ENCODE measurements at regions of chr9 and their contacts with region 1.

Region 1: DNA sequence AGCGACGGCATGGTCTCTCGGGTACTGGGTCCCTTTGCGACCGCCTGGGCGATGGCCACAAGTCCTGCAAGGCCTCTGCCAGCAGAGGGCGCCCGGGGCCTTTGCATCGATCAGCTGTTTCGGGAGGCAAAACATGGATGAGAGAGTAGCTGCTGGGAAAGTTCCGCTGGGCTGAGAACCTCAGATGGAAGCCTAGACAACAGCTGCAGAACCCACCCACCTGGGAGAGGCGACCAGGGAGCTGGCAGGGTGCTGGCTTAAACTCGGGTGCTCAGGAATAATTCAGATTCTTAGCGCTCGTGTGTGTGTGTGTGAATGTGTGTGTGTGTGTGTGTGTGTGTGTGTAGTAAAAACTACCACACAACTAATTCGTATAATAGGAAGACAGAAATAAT is 50.0 kb downstream of the TRIM32 start:
- DNase-seq: peak; percentile 66
- ATAC-seq: peak; percentile 93
- H3K4me3 ChIP-seq: no peak overlapping the region
- H3K27ac ChIP-seq: no peak overlapping the region
- H3K4me1 ChIP-seq: no peaks in the 10 kb centered on the region
- H3K27me3 ChIP-seq: peaks cover 5% of the 10 kb centered on the region
- CTCF ChIP-seq: peak; percentile 93
- POLR2A ChIP-seq: no peak
- RAD21 ChIP-seq: peak; percentile 91

Region 2: GRCh38 chr9:116726602-116727001 is 10.5 kb before region 1 on chr9:
- CTCF ChIA-PET with region 1: interaction called, 19 read pairs
- POLR2A ChIA-PET with region 1: no interaction called
- dilution Hi-C with region 1: no loop called
- in situ Hi-C with region 1: no loop called
- intact Hi-C with region 1: no loop called
- DNase-seq: no peak
- ATAC-seq: no peak
- H3K4me3 ChIP-seq: no peak overlapping the region
- H3K27ac ChIP-seq: no peak overlapping the region
- H3K4me1 ChIP-seq: no peaks in the 10 kb centered on the region
- H3K27me3 ChIP-seq: peaks cover 16% of the 10 kb centered on the region
- CTCF ChIP-seq: no peak
- POLR2A ChIP-seq: no peak
- RAD21 ChIP-seq: no peak

Region 3: GRCh38 chr9:116860509-116861120 is 123.5 kb after region 1 on chr9:
- CTCF ChIA-PET with region 1: interaction called, 56 read pairs
- POLR2A ChIA-PET with region 1: no interaction called
- dilution Hi-C with region 1: no loop called
- in situ Hi-C with region 1: loop called (anchors 5 kb)
- intact Hi-C with region 1: loop called (anchors 1 kb)
- DNase-seq: peak; percentile 63
- ATAC-seq: peak; percentile 99
- H3K4me3 ChIP-seq: no peak overlapping the region
- H3K27ac ChIP-seq: no peak overlapping the region
- H3K4me1 ChIP-seq: no peaks in the 10 kb centered on the region
- H3K27me3 ChIP-seq: no peaks in the 10 kb centered on the region; the same call in 1 of the 2 replicates
- CTCF ChIP-seq: peak; percentile 70
- POLR2A ChIP-seq: no peak
- RAD21 ChIP-seq: peak; percentile 61

Region 4: GRCh38 chr9:117411548-117411947 is 674.4 kb after region 1 on chr9:
- CTCF ChIA-PET with region 1: interaction called, 4 read pairs
- POLR2A ChIA-PET with region 1: no interaction called
- dilution Hi-C with region 1: no loop called
- in situ Hi-C with region 1: no loop called
- intact Hi-C with region 1: loop called (anchors 1 kb)
- DNase-seq: peak; percentile 6
- ATAC-seq: no peak
- H3K4me3 ChIP-seq: no peak overlapping the region
- H3K27ac ChIP-seq: no peak overlapping the region
- H3K4me1 ChIP-seq: no peaks in the 10 kb centered on the region
- H3K27me3 ChIP-seq: peaks cover 34% of the 10 kb centered on the region
- CTCF ChIP-seq: peak; percentile 54
- POLR2A ChIP-seq: no peak
- RAD21 ChIP-seq: peak; percentile 54

Region 5: GRCh38 chr9:117644133-117644931 is 907.2 kb after region 1 on chr9:
- CTCF ChIA-PET with region 1: no interaction called
- POLR2A ChIA-PET with region 1: no interaction called
- dilution Hi-C with region 1: no loop called
- in situ Hi-C with region 1: no loop called
- intact Hi-C with region 1: loop called (anchors 10 kb)
- DNase-seq: peak; percentile 49
- ATAC-seq: peak; percentile 94
- H3K4me3 ChIP-seq: no peak overlapping the region
- H3K27ac ChIP-seq: no peak overlapping the region
- H3K4me1 ChIP-seq: no peaks in the 10 kb centered on the region
- H3K27me3 ChIP-seq: no peaks in the 10 kb centered on the region
- CTCF ChIP-seq: peak; percentile 89
- POLR2A ChIP-seq: no peak
- RAD21 ChIP-seq: peak; percentile 90

Measured in IMR-90 (cell line).